ENCODE measurements at regions of chr10 and their contacts with region 1.

Region 1: DNA sequence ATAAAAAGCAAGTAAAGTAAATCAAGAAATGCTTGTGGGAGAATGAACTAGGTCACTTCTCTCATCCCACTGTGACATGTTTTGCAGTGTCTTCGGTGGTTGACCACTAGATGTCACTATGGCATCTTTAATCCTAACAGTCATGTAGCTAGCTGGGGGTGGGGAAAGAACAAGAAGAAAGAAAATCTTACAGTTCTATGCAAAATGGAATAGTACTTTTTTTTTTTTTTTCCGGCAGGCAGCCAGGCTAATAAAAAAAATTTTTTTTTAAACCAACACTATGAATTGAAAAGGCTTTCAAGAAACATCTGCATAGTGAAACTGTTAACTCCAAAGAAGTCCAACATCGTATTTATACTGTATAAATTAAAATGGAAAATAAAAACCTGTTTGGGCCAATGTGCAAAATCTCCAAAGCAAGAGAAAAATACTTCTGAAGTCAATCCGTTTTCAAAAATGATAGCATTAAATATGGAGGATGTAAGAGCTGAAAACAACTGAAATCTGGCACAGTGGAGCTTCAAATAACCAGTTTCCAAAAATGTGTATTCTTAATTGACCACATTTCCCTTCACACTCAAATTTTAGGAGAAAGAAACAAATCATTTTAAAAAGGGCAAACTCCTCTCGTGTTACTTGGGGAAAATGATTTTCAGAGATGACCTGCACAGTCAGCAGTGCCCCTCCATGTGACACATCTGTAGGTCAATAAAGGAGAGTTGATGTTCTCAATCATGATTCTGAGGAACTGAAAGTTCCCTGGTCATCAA is 38.5 kb downstream of the CDK1 start:
- DNase-seq: peak in 34 of 42 donors; percentile 10 to 90 (median 67)

Region 2: GRCh38 chr10:60681103-60681502 is 135.7 kb before region 1 on chr10:
- intact Hi-C with region 1: no loop called
- DNase-seq: no peak

Region 3: GRCh38 chr10:60944159-60944909 is 127.5 kb after region 1 on chr10 and contains the start of gene RHOBTB1:
- intact Hi-C with region 1: loop called (anchors 10 kb)
- DNase-seq: peak; percentile 49 to 92 (median 82)

Region 4: GRCh38 chr10:61140765-61141392 is 324.1 kb after region 1 on chr10:
- intact Hi-C with region 1: no loop called
- DNase-seq: peak in 28 of 42 donors; percentile 6 to 79 (median 52)

Region 5: DNA sequence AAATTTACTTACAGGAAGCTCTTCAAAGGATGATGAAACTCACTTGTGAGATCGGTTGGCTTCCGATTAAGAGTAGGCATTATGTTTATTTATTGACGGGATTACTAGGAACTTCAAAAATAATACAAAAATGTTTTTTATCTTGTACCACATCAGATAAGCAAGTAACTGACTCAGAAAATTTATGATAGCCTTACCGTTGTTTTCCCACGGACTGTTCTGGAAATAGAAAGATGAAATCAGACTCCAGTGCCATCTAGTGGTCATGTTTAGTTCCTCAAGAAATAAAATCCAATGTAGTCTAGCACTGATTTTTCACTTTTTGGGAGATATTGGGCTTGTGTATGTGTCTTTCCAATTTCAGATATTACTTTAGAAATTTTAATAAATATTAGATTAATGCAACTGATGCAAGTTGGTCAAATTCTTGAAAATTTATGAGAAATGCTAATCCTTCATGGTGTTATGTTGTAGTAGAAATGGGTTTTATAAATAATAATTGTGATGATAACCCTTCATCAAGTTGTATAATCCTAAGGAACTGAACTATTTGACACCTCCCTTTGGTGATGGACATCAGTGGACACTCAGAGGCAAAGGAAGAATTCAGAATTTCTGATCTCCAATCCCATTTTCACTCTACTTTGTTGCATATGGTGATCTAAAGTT is 467.5 kb after region 1 on chr10:
- intact Hi-C with region 1: loop called (anchors 2 kb)
- DNase-seq: peak in 3 of 42 donors; percentile 22 to 65 (median 36)